ENCODE measurements at regions of chr9 and their contacts with region 1.

Region 1: GRCh38 chr9:70656281-70656680 is 241.8 kb upstream of the KLF9 start:
- DNase-seq: no peak
- ATAC-seq: no peak

Region 2: GRCh38 chr9:70668751-70669150 is 12.5 kb after region 1 on chr9:
- intact Hi-C with region 1: loop called (anchors 2 kb)
- DNase-seq: no peak
- ATAC-seq: peak; percentile 69

Region 3: GRCh38 chr9:70679845-70680244 is 23.6 kb after region 1 on chr9:
- intact Hi-C with region 1: no loop called
- DNase-seq: no peak
- ATAC-seq: no peak

Measured in sciatic nerve (tissue), 2 donors.